Head of caudate nucleus (tissue), 42 donors: ENCODE measurements at regions of chr2 and their contacts with region 1.

Region 1: GRCh38 chr2:206981739-206982340 is 42.5 kb downstream of the CPO start:
- DNase-seq: peak; percentile 76 to 95 (median 90)

Region 2: GRCh38 chr2:206693399-206694137 is 288.3 kb before region 1 on chr2:
- intact Hi-C with region 1: loop called (anchors 10 kb)
- DNase-seq: peak in 17 of 42 donors; percentile 8 to 77 (median 45)

Region 3: DNA sequence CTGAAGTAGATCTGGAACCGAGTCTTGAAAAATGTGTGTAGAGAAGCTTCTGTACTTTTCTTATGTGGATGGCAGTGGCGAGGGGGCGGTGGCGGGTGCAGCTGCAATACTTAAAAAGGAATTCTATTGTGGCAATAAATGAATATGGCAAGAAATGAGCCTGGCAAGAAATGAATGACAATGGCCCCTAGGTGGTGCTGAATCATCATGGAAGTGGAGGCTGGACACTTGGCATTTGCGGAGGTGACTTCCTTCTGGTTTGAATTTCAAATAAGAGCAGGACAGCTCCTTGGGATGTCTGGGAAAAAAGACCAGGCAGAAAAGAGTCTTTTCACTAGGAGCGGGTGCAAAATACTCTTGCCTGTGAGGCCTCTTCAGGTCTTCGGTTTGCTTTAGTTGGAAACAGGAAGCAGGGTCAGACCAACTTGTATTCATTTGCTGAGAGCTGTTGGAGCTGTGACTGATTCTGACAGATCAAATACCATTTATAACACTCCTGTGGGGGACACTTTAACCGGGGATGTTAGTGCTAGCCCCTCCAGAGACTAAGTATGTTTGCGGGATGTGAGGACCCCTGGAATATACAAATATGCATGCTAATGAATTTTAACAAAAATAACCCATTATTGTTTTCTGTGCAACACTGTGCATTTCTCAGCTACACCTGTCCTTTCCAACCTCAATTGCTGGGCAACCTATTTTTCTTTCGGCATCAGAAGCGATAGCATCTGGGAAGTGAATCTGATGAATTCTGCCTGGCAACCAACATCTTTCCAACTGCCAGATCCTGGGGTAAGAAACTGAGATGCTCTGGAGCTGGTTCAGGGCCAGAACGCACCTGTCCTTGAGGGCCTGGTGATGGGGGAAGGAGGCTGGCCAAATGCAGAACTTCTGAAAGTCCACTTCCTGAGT is 181.1 kb before region 1 on chr2:
- intact Hi-C with region 1: loop called (anchors 10 kb)
- DNase-seq: peak; percentile 50 to 87 (median 71)

Region 4: DNA sequence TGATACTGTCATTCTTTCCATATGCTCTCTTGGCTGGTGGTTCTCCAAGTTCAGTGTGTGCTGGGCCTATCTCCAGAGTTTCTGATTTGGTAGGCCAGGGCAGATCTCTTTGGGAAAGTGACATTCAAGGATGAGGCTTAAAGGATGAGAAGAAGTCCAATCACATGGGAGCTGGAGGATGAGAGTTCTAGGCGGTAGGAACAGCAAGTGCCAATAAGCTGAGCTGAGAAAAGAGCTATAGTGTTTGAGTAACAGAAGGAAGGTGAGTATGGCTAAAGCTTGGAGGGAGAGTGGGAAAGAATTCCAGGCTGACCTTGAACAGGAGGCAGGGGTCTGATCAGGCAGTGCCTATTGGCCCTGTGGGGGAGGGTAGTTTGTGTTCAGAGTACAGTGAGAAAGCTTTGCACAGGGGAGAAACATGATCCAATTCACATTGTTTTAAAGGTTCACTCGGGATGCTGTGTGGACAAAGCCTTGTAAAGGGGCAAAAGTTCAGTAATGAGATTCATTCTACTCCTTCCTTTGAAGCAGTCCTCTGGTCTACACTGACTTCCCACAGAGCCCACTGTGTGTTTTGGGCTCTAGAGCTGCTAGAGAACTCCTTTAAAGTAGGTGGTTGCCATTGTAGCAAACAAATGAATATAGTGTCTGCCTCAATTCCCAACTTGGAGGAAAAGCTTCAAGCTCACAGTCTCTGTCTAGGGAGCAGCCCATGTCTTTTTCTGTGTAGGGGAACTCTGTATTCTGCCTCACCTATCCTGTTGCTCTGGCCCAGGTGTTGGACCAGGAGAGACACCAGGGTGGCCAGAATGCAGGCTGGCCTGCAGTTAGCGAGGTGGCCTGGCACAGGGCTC is 134.6 kb before region 1 on chr2:
- intact Hi-C with region 1: no loop called
- DNase-seq: no peak

Region 5: DNA sequence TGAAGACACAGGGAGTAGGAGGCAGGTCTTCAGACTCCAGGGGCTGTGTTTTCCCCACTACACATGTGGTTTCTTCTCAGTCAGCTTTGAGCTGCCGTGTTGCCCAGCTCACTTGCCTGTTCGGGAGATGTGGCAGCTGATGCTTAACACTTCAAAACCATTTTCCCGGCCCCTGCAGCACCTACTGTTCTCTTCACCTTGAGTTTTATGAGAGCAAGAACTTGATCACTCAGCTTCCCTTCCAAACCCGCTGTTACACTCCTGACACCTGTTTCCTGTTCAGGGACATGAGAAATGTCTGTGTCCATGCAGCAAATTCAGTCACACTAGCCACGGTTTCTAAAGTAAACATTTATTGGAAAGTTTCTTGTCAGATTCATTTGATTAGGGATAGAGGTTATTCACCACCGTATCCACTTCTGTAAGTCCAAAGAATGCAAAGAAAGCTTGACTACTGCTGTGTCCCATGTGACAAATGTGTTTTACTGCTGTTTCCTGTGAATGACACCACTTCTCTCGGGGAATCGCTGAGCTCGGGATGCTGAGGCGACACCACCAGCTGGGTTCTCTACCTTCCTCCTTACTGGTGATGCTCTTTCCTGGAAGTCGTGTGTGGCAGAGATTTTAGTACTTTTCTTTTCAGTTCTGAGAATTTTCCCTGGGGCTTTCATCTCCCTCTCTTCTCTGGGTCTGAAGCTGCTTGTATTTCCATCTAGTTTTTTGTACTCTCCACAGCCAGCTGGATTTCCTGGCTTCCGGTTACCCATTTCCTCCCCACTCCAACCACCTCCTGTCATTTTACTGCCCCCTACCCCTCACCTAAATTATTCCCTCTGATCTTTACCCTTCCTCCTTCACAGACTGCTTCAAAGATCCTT is 92.2 kb after region 1 on chr2:
- intact Hi-C with region 1: loop called (anchors 10 kb)
- DNase-seq: peak in 36 of 42 donors; percentile 7 to 77 (median 43)